Motor neuron (in vitro differentiated cells): ENCODE measurements at regions of chr12 and their contacts with region 1.

Region 1: DNA sequence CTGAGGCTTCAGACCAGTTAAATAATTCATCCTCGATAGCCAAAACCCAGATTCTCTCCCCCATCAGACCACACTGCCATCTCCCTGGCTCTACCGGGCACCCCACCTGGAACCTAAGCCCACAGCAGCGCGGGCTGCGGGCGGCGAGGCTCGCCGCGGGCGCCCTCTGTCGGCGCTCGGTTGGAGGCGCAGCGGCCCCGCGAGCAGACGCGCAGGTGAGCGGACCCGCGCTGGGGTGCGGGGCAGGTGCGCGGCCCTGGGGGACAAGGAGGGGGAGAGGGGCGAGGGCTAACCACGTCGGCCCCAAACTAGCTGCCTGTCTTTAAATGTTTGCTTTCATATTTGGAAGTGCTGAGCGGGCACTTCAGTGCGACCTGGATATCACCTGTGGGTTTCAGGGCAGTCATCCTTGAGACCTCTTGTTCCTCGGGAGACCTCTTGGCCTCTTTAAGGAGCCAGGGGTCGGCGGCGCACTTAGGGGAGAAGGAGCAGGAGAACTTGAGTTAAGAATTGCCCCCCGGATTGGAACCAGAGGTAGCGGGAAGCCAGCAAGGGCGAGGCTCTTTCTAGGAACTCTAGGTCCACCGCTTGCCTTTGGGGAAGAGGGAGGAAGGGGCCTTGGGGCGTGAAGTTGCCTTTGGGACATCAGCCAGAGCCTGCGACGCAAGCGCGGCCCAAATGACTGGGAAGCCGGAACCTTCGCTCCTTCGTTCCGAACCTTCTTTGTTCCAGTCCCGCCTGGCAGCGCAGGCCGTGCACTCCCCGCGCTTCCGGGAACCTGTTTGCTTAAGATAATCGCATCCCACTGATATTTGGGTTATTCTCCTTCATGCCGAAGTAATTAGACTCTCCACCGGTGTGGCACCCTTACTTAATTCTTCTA is 78.7 kb downstream of the NEDD1 start:
- ATAC-seq: peak; percentile 46 to 93 (median 60)
- H3K4me3 ChIP-seq: peak overlapping the region; percentile 13 to 40 (median 36)
- H3K27ac ChIP-seq: no peak overlapping the region
- H3K4me1 ChIP-seq: peaks cover 31 to 33% of the 10 kb centered on the region in 2 donors

Region 2: DNA sequence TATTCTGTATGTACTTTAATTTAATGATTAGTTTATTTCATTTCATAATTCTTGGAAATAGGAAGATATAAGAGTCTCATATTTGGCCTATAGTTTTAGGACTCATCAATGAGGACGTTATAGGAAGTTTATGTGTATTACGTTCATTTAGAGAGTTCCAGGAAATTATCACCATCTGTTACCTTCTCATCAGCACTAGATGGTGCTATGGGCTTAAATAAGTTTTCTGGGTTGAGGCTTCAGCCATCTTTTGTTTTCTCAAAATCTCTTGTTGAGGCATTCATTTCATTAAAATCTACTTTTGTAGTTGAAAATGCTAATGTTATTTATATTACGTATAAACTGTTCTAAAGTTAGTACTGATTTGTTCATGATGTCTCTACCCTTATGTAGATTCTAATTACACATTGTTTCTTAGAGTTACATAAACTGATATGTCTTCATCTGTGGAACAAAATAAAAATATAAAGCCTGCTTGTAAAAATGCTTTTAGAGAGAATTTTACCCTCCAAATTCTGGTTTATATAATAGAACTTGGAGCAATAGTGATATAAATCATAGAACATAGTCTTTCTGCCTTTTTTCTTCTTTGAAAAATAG is 407.1 kb before region 1 on chr12:
- in situ Hi-C with region 1: loop called in 2 of 9 experiments (anchors 25 kb)
- ATAC-seq: peak in 6 of 8 experiments; percentile 41 to 85 (median 62)
- H3K4me3 ChIP-seq: no peak overlapping the region
- H3K27ac ChIP-seq: no peak overlapping the region
- H3K4me1 ChIP-seq: peaks cover 5 to 10% of the 10 kb centered on the region in 2 donors

Region 3: GRCh38 chr12:97308576-97309198 is 323.0 kb after region 1 on chr12:
- in situ Hi-C with region 1: loop called in 3 of 9 experiments (anchors 25 kb)
- ATAC-seq: no peak
- H3K4me3 ChIP-seq: no peak overlapping the region
- H3K27ac ChIP-seq: no peak overlapping the region
- H3K4me1 ChIP-seq: peaks cover 24 to 27% of the 10 kb centered on the region in 2 donors

Region 4: DNA sequence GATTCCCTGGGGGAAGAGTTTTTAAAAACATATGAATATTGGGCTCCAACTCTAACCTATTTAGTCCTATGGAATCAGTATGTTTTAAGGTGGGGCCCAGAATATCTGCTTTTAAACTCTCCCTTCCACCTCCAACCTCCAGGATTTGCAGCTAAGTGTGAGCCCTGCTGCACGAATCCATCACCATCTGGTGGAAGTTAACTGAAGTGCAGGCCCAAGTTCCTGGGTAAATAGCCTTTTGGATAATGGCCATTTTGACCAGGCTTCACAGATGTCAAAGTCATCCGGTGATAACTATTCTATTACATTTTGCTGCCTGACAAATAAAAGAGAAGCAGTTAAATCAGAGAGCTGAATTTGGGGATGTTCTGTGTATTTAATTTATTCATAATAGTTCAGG is 418.8 kb after region 1 on chr12:
- in situ Hi-C with region 1: loop called in 2 of 9 experiments (anchors 10 to 25 kb)
- ATAC-seq: peak; percentile 30 to 81 (median 52)
- H3K4me3 ChIP-seq: no peak overlapping the region
- H3K27ac ChIP-seq: no peak overlapping the region
- H3K4me1 ChIP-seq: no peaks in the 10 kb centered on the region

Region 5: DNA sequence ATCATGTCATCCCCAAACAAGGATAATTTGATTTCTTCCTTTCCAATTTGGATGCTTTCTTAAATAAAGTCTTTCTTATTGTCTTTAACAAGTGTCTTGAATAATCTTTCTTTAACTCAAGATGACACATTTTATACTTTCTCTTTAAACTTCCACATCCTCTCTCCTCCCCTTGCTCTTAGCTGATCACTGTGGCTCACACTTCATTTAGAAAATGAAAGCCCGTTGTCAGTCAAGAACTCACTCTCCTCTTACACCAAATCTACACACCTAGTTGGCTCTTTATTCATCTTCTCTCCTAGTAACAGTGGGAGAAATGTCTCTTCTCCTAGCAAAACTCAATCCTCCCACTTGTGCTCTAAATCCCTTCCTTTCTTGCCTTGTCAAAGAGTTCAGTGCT is 466.5 kb after region 1 on chr12:
- in situ Hi-C with region 1: loop called in 1 of 9 experiments (anchors 25 kb)
- ATAC-seq: no peak
- H3K4me3 ChIP-seq: no peak overlapping the region
- H3K27ac ChIP-seq: no peak overlapping the region
- H3K4me1 ChIP-seq: peaks cover 3 to 6% of the 10 kb centered on the region in 2 donors